ENCODE measurements at regions of chr15 and their contacts with region 1.

Region 1: DNA sequence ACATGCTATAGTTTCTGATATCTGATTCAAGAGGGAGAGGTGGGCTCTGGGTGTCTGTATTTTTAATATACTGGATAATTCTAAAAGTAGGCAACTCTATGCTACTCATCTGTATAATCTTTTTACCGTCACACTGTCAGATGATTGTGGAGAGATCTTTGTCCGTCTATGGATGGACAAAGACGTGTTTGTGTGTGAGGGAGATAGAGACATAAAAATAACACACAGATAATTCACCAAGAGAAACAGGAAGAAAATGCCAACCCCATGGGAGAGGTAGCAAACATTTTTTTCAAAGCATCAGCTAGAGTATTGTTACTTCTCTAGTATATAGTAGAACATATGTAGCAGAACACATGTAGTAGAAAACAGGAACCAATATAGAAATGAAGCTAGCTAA is 346.1 kb downstream of the AGBL1 start:
- DNase-seq: no peak
- H3K4me3 ChIP-seq: no peak overlapping the region
- H3K27ac ChIP-seq: no peak overlapping the region
- H3K4me1 ChIP-seq: no peaks in the 10 kb centered on the region
- H3K27me3 ChIP-seq: no peaks in the 10 kb centered on the region
- CTCF ChIP-seq: no peak

Region 2: GRCh38 chr15:86483936-86484335 is 58.2 kb after region 1 on chr15:
- intact Hi-C with region 1: loop called (anchors 10 kb)
- DNase-seq: no peak
- H3K4me3 ChIP-seq: no peak overlapping the region
- H3K27ac ChIP-seq: no peak overlapping the region
- H3K4me1 ChIP-seq: no peaks in the 10 kb centered on the region
- H3K27me3 ChIP-seq: no peaks in the 10 kb centered on the region
- CTCF ChIP-seq: no peak

Measured in colonic mucosa (tissue), 4 donors.